ENCODE measurements at regions of chr12 and their contacts with region 1.

Region 1: GRCh38 chr12:53746592-53747092 is 5.1 kb downstream of the CISTR start:
- DNase-seq: peak; percentile 80
- H3K4me3 Mint-ChIP-seq: no peak overlapping the region
- H3K27ac Mint-ChIP-seq: no peak overlapping the region
- H3K4me1 Mint-ChIP-seq: peaks cover 16% of the 10 kb centered on the region
- H3K27me3 Mint-ChIP-seq: peaks cover 36% of the 10 kb centered on the region

Region 2: GRCh38 chr12:53701518-53702260 is 45.0 kb before region 1 on chr12:
- intact Hi-C with region 1: loop called (anchors 1 kb)
- DNase-seq: peak; percentile 49
- H3K4me3 Mint-ChIP-seq: no peak overlapping the region
- H3K27ac Mint-ChIP-seq: no peak overlapping the region
- H3K4me1 Mint-ChIP-seq: peaks cover 7% of the 10 kb centered on the region
- H3K27me3 Mint-ChIP-seq: peaks cover 78% of the 10 kb centered on the region

Region 3: DNA sequence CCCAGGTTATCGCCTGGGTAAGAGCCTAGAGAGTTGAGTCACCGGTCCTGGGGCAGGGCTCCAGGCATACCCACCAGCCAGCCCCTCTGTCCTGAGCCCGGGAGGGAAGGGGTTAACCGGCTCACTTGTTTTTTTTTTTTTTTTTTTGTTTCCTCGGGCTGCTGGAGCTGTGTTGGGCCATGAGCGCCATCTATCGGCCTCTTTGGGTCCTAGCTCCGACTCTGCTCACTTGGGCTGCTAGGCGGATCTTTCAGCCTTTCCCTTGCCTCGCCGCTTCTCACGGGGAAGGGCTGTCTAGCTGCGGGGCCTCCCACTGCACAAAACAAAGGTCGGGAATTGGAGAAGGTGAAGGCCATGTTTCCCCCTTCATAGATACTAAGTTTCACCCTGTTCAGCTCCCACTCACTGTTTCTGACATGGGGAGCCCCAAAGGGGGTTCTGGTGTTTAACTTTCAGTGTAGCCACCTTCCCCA is 444.9 kb after region 1 on chr12:
- intact Hi-C with region 1: loop called (anchors 10 kb)
- DNase-seq: peak; percentile 66
- H3K4me3 Mint-ChIP-seq: no peak overlapping the region
- H3K27ac Mint-ChIP-seq: no peak overlapping the region
- H3K4me1 Mint-ChIP-seq: peaks cover 20% of the 10 kb centered on the region
- H3K27me3 Mint-ChIP-seq: peaks cover 43% of the 10 kb centered on the region

Measured in activated T-helper 2 cell treated with anti-CD3 and anti-CD28 coated beads, Interferon-gamma antibody, Interleukin-2, Interleukin-4, amounts not matched to agents 10 μg/mL and 5 μg/mL and 100 μg/mL, durations not matched to agents 14 hours and 24 hours and 36 hours (primary cell).